SK-N-SH (cell line): ENCODE measurements at regions of chr15 and their contacts with region 1.

Region 1: DNA sequence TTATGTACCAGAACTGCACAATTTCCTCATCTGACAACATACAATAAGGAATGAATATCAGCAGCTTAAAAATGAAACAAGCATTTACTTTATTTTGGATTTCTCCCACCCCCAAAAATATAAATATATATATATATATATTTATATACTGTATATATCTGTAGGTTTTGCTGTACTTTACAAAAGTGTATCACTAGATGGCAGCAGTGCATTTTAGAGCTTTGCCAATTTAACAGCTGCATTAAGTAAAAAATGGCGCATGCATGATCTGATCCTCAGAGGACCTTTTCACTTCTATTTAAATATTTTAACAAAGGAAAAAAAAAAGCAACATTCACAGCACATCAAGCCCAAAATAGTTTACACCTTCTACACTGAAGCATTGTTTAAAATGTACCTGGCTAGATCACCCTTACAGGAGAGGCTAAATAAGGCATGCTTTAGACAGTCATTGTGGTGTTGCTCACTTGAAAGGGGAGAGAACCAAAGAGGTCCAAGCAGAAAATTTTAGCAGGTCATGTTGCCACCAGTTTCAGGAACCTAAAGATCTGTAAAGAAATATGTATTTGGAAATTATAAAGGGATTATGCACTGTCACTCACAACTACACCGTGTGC is 72.6 kb downstream of the NPTN start:
- DNase-seq: peak; percentile 42
- H3K4me3 ChIP-seq: no peak overlapping the region
- H3K27ac ChIP-seq: no peak overlapping the region
- H3K4me1 ChIP-seq: peaks cover 0 to 2% of the 10 kb centered on the region in 2 experiments; a peak in 2 of 4 replicates
- H3K27me3 ChIP-seq: no peaks in the 10 kb centered on the region
- CTCF ChIP-seq: peak; percentile 61
- EP300 ChIP-seq: no peak
- RAD21 ChIP-seq: peak; percentile 81

Region 2: DNA sequence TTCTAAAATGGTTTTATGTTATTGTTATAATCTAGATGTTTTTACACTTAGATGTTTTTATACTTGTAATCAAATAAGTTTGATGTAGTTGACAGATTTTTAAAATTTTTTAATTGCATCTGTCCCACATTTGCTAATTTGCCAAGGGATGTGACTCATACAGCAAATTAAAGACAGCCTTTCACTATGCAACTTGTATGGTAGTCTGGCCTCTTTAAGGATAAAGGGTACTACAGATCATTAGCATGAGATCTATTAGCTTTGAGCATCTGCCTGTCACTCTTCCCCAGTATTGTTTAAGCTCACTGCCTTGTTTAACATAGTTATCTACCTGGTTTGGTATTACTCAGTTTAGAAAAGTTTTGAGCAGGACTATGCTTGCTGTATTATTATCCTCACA is 10.4 kb before region 1 on chr15:
- CTCF ChIA-PET with region 1: interaction called, 14 read pairs
- POLR2A ChIA-PET with region 1: no interaction called
- DNase-seq: no peak
- H3K4me3 ChIP-seq: no peak overlapping the region
- H3K27ac ChIP-seq: no peak overlapping the region
- H3K4me1 ChIP-seq: no peaks in the 10 kb centered on the region
- H3K27me3 ChIP-seq: no peaks in the 10 kb centered on the region
- CTCF ChIP-seq: no peak
- EP300 ChIP-seq: no peak
- RAD21 ChIP-seq: no peak

Region 3: GRCh38 chr15:73585871-73586654 is 25.5 kb after region 1 on chr15:
- CTCF ChIA-PET with region 1: interaction called, 19 read pairs
- POLR2A ChIA-PET with region 1: no interaction called
- DNase-seq: no peak
- H3K4me3 ChIP-seq: no peak overlapping the region
- H3K27ac ChIP-seq: no peak overlapping the region
- H3K4me1 ChIP-seq: no peaks in the 10 kb centered on the region; a peak in 1 of 4 replicates
- H3K27me3 ChIP-seq: no peaks in the 10 kb centered on the region
- CTCF ChIP-seq: no peak
- EP300 ChIP-seq: no peak
- RAD21 ChIP-seq: no peak

Region 4: GRCh38 chr15:73677146-73677607 is 116.6 kb after region 1 on chr15:
- CTCF ChIA-PET with region 1: interaction called, 14 read pairs
- POLR2A ChIA-PET with region 1: no interaction called
- DNase-seq: peak; percentile 60
- H3K4me3 ChIP-seq: no peak overlapping the region
- H3K27ac ChIP-seq: no peak overlapping the region
- H3K4me1 ChIP-seq: no peaks in the 10 kb centered on the region
- H3K27me3 ChIP-seq: peaks cover 22% of the 10 kb centered on the region
- CTCF ChIP-seq: peak; percentile 81
- EP300 ChIP-seq: no peak
- RAD21 ChIP-seq: peak; percentile 73